CD14-positive monocyte (primary cell): ENCODE measurements at regions of chr3 and their contacts with region 1.

Region 1: GRCh38 chr3:56997675-56998074 is 62.8 kb upstream of the SPATA12 start:
- DNase-seq: no peak
- H3K4me3 ChIP-seq: no peak overlapping the region
- H3K4me3 Mint-ChIP-seq: no peak overlapping the region
- H3K27ac ChIP-seq: no peak overlapping the region
- H3K27ac Mint-ChIP-seq: no peak overlapping the region
- H3K4me1 ChIP-seq: no peaks in the 10 kb centered on the region
- H3K4me1 Mint-ChIP-seq: no peaks in the 10 kb centered on the region
- H3K27me3 ChIP-seq: no peaks in the 10 kb centered on the region
- H3K27me3 Mint-ChIP-seq: peaks cover 0 to 2% (median 2%) of the 10 kb centered on the region in 3 donors
- CTCF ChIP-seq: no peak

Region 2: DNA sequence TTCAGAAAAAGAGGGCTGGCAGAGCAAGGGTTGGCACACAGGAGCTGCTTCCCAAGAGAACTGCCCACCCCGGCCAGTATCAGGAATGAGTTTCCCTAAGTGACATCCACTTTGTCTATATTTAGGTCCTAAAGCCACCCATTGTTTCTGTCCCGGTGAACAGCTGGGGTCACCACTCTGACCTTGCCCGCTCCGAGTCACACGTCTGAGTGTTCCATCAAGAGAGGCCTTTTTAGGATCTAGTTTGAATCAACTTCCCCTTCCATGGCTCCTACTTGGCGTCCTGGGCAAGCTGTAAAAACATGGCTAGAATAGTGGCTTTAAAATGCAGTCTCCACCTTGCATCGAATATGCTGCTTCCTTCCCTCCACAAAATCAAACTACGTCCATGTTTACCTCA is 86.3 kb before region 1 on chr3:
- intact Hi-C with region 1: no loop called
- DNase-seq: no peak
- H3K4me3 ChIP-seq: no peak overlapping the region
- H3K4me3 Mint-ChIP-seq: no peak overlapping the region
- H3K27ac ChIP-seq: no peak overlapping the region
- H3K27ac Mint-ChIP-seq: no peak overlapping the region
- H3K4me1 ChIP-seq: peaks cover 8 to 9% of the 10 kb centered on the region in 2 donors
- H3K4me1 Mint-ChIP-seq: peaks cover 14% of the 10 kb centered on the region
- H3K27me3 ChIP-seq: no peaks in the 10 kb centered on the region
- H3K27me3 Mint-ChIP-seq: peaks cover 0 to 1% (median 0%) of the 10 kb centered on the region in 3 donors
- CTCF ChIP-seq: no peak

Region 3: DNA sequence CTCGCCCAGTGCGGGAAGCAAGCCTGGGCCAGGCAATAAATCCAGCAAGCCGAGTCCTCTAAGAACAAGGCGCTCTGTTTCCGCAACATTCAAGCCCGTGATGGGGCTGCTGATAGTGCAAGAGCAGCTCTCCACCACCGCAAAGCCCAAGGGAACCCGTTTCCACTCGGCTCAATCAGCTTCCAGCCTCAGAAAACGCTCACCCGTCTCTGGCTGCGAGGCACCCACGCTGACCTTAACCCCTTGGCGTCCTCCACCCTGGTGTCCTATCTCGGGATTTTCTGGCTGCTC is 80.6 kb after region 1 on chr3:
- intact Hi-C with region 1: loop called in 1 of 2 experiments (anchors 5 kb)
- DNase-seq: peak; percentile 26 to 41 (median 33)
- H3K4me3 ChIP-seq: peak overlapping the region; percentile 62 to 84 (median 76)
- H3K4me3 Mint-ChIP-seq: peak overlapping the region; percentile 81 to 93
- H3K27ac ChIP-seq: no peak overlapping the region
- H3K27ac Mint-ChIP-seq: peak overlapping the region in 3 of 7 donors; percentile 58 to 67 (median 64)
- H3K4me1 ChIP-seq: peaks cover 9 to 15% of the 10 kb centered on the region in 2 donors
- H3K4me1 Mint-ChIP-seq: peaks cover 19% of the 10 kb centered on the region
- H3K27me3 ChIP-seq: peaks cover 17 to 50% of the 10 kb centered on the region in 2 donors
- H3K27me3 Mint-ChIP-seq: peaks cover 44 to 50% (median 49%) of the 10 kb centered on the region in 3 donors
- CTCF ChIP-seq: no peak